Activated CD8-positive, alpha-beta memory T cell treated with anti-CD3 and anti-CD28 coated beads, Interleukin-2, amount 10 ng/mL, durations not matched to agents 7 days and 5 days (primary cell): ENCODE measurements at regions of chr13 and their contacts with region 1.

Region 1: GRCh38 chr13:30802953-30803478 is 67.7 kb downstream of the ALOX5AP start:
- DNase-seq: peak; percentile 86
- ATAC-seq: peak; percentile 100
- H3K4me3 Mint-ChIP-seq: peak overlapping the region; percentile 57
- H3K27ac Mint-ChIP-seq: peak overlapping the region; percentile 45
- H3K4me1 Mint-ChIP-seq: peaks cover 24% of the 10 kb centered on the region
- H3K27me3 Mint-ChIP-seq: no peaks in the 10 kb centered on the region

Region 2: GRCh38 chr13:30676672-30677071 is 126.3 kb before region 1 on chr13:
- CTCF ChIA-PET with region 1: interaction called, 11 read pairs
- DNase-seq: no peak
- ATAC-seq: no peak
- H3K4me3 Mint-ChIP-seq: no peak overlapping the region
- H3K27ac Mint-ChIP-seq: no peak overlapping the region
- H3K4me1 Mint-ChIP-seq: peaks cover 27% of the 10 kb centered on the region
- H3K27me3 Mint-ChIP-seq: peaks cover 21% of the 10 kb centered on the region

Region 3: GRCh38 chr13:30739761-30740642 is 63.0 kb before region 1 on chr13:
- CTCF ChIA-PET with region 1: no interaction called
- DNase-seq: peak; percentile 91
- ATAC-seq: peak; percentile 71
- H3K4me3 Mint-ChIP-seq: peak overlapping the region; percentile 91
- H3K27ac Mint-ChIP-seq: peak overlapping the region; percentile 99
- H3K4me1 Mint-ChIP-seq: peaks cover 80% of the 10 kb centered on the region
- H3K27me3 Mint-ChIP-seq: no peaks in the 10 kb centered on the region

Region 4: GRCh38 chr13:30792285-30793000 is 10.6 kb before region 1 on chr13:
- CTCF ChIA-PET with region 1: interaction called, 10 read pairs
- DNase-seq: no peak
- ATAC-seq: no peak
- H3K4me3 Mint-ChIP-seq: no peak overlapping the region
- H3K27ac Mint-ChIP-seq: no peak overlapping the region
- H3K4me1 Mint-ChIP-seq: peaks cover 32% of the 10 kb centered on the region
- H3K27me3 Mint-ChIP-seq: no peaks in the 10 kb centered on the region

Region 5: DNA sequence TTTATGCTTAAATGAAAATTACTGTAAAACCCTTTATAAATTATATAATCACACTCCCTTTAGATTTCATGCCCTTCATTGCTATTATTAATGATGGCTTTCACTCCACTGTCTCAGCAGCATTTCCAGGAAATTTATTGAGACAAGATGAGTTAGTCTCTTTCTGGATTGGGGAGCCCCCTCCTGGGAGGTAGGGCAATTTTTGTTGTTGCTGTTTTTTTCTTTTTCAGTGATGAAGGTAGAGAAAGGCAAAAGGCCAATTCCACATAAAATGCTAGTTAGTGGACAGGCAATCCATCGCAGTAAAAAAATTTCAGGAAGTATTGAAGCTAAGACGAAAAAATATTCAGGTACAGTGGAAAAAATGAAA is 209.6 kb after region 1 on chr13:
- CTCF ChIA-PET with region 1: no interaction called
- DNase-seq: no peak
- ATAC-seq: no peak
- H3K4me3 Mint-ChIP-seq: no peak overlapping the region
- H3K27ac Mint-ChIP-seq: no peak overlapping the region
- H3K4me1 Mint-ChIP-seq: peaks cover 11% of the 10 kb centered on the region
- H3K27me3 Mint-ChIP-seq: peaks cover 57% of the 10 kb centered on the region

Region 6: GRCh38 chr13:31518645-31519044 is 715.6 kb after region 1 on chr13:
- CTCF ChIA-PET with region 1: no interaction called
- DNase-seq: no peak
- ATAC-seq: no peak
- H3K4me3 Mint-ChIP-seq: no peak overlapping the region
- H3K27ac Mint-ChIP-seq: no peak overlapping the region
- H3K4me1 Mint-ChIP-seq: no peaks in the 10 kb centered on the region
- H3K27me3 Mint-ChIP-seq: peaks cover 2% of the 10 kb centered on the region